GM12878 (cell line): ENCODE measurements at regions of chr13 and their contacts with region 1.

Region 1: GRCh38 chr13:93233997-93234416 is 7.4 kb downstream of the GPC6 start:
- DNase-seq: no peak
- ATAC-seq: peak; percentile 64
- H3K4me3 ChIP-seq: no peak overlapping the region
- H3K27ac ChIP-seq: no peak overlapping the region
- H3K4me1 ChIP-seq: no peaks in the 10 kb centered on the region
- H3K27me3 ChIP-seq: no peaks in the 10 kb centered on the region
- CTCF ChIP-seq: peak in 2 of 3 experiments; percentile 19 to 37; a peak in 2 of 6 replicates
- EP300 ChIP-seq: no peak
- POLR2A ChIP-seq: no peak
- RAD21 ChIP-seq: no peak

Region 2: DNA sequence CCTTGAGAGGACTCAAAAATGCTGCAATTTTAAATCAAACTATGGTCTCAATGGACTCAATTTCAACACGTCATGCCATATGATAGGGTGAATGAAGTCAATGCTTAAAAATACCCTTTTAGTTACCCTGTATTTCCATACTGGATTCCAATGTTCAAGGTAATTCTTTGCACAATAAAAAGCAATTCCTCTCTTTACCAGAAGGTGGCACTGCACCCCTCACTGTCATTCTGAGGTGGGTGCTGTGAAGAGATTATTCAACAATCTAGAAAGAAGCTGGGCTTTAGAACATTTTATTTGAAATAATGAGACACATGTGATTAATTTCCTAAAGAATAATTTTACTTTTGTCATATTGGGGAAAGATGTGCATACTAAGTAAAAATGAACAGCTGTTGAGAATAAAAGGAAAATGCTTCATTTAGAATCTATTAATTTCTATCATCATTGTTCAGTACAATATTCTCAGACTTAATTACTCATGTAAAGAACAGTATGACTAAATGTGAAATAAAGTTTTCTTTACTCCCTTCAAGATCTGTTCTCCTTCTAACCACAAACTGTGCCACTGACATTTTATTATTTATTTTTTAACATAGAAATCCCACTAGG is 1046.5 kb before region 1 on chr13:
- CTCF ChIA-PET with region 1: no interaction called
- POLR2A ChIA-PET with region 1: no interaction called
- RAD21 ChIA-PET with region 1: no interaction called
- SMC1A ChIA-PET with region 1: no interaction called
- in situ Hi-C with region 1: no loop called
- intact Hi-C with region 1: loop called (anchors 10 kb)
- DNase-seq: no peak
- ATAC-seq: peak; percentile 82
- H3K4me3 ChIP-seq: no peak overlapping the region
- H3K27ac ChIP-seq: no peak overlapping the region
- H3K4me1 ChIP-seq: no peaks in the 10 kb centered on the region
- H3K27me3 ChIP-seq: no peaks in the 10 kb centered on the region
- CTCF ChIP-seq: peak; percentile 73 to 78 (median 76)
- EP300 ChIP-seq: no peak
- POLR2A ChIP-seq: no peak
- RAD21 ChIP-seq: peak; percentile 82

Region 3: GRCh38 chr13:92573467-92574057 is 660.4 kb before region 1 on chr13:
- CTCF ChIA-PET with region 1: interaction called, 12 read pairs
- POLR2A ChIA-PET with region 1: no interaction called
- RAD21 ChIA-PET with region 1: no interaction called
- SMC1A ChIA-PET with region 1: no interaction called
- in situ Hi-C with region 1: no loop called
- intact Hi-C with region 1: no loop called
- DNase-seq: no peak
- ATAC-seq: peak; percentile 90
- H3K4me3 ChIP-seq: no peak overlapping the region
- H3K27ac ChIP-seq: no peak overlapping the region
- H3K4me1 ChIP-seq: no peaks in the 10 kb centered on the region
- H3K27me3 ChIP-seq: no peaks in the 10 kb centered on the region
- CTCF ChIP-seq: peak in 2 of 3 experiments; percentile 17 to 39; a peak in 3 of 6 replicates
- EP300 ChIP-seq: no peak
- POLR2A ChIP-seq: no peak
- RAD21 ChIP-seq: peak; percentile 41; the same call in 1 of the 2 replicates